OCI-LY7 (cell line): ENCODE measurements at regions of chr19 and their contacts with region 1.

Region 1: DNA sequence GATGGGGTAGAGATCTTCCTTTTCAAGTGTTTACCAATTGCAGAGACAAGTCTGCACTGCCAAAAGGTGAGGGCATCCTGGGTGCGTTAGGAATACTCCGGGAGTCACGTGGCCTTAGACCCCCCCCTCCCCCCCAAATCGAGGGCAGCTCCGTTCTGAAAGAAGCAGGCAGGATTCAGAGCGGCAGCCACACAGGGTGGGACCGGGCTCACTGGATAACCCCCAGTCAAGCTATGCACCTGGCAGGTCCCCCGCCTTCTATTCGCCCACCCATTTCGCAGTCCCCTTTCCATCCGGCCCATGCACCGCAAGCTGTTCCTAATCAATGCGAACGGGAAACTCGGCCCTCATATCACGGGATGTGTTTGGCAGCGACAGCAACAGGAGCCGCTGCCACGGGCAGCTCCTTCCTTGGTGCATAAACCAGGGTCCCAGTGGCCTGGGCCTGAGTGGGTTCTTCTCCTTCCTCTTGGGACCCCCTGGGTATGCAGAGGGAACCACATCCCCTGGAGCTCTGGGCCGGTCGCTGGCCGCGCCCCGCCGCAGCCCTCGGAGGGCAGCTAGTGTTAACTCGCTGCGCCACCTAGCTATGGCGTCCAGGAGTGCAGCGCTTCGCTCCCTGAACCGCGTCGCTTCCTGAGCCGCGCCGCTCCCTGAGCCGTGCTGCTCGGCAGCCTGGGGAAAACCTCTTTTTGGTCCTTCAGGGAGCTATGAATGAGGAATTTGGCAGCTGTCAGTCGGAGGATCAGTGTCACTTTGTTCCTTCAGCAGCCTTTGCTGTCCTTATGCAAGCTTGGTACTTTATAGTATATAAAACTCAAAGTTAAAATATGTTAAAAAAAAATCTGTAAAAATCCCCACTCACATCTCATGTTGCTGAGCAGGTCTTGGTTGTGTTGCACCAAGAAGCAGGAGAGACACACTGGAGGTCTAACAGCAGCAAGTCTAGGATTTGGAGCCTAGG is 41.4 kb downstream of the LYL1 start:
- DNase-seq: peak; percentile 86
- H3K4me3 ChIP-seq: peak overlapping the region; percentile 61
- H3K27ac ChIP-seq: no peak overlapping the region
- H3K4me1 ChIP-seq: peaks cover 29% of the 10 kb centered on the region
- CTCF ChIP-seq: peak; percentile 95

Region 2: DNA sequence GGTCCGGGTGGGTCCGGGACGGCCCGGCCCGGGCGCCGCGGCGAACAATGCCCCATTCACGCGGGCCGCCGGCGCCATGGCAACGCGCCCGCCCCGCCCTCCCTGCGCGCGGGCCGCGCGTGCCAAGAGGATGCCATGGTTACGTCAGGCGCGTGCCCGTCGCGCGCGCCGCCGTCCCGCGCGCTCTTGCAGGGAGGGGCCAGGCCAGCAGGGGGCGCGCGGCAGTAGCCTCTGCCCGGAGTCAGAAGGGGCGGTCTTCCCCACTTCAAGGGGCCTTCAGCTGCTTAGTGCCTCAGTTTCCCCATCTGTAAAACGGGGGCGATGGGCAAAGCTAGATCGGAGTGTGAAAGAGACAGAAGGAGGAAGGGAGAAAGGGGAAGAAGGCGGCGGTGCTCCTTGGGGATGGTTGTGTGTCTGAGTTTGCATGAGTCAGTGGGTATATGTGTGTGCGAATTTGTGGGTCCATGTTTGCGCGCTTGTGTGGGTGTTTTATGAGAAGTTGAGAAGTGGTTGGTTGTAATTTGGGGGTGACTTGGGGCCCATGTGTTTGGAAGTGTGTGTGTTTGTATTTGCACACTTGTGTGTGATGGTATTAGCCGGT is 77.6 kb before region 1 on chr19:
- CTCF ChIA-PET with region 1: interaction called, 8 read pairs
- POLR2A ChIA-PET with region 1: no interaction called
- intact Hi-C with region 1: loop called (anchors 2 kb)
- DNase-seq: peak; percentile 79
- H3K4me3 ChIP-seq: peak overlapping the region; percentile 51
- H3K27ac ChIP-seq: no peak overlapping the region
- H3K4me1 ChIP-seq: no peaks in the 10 kb centered on the region
- CTCF ChIP-seq: peak; percentile 82

Region 3: GRCh38 chr19:13042443-13043130 is 18.7 kb before region 1 on chr19:
- CTCF ChIA-PET with region 1: interaction called, 4 read pairs
- POLR2A ChIA-PET with region 1: interaction called, 11 read pairs
- intact Hi-C with region 1: no loop called
- DNase-seq: no peak
- H3K4me3 ChIP-seq: no peak overlapping the region
- H3K27ac ChIP-seq: no peak overlapping the region
- H3K4me1 ChIP-seq: peaks cover 6% of the 10 kb centered on the region
- CTCF ChIP-seq: no peak

Region 4: DNA sequence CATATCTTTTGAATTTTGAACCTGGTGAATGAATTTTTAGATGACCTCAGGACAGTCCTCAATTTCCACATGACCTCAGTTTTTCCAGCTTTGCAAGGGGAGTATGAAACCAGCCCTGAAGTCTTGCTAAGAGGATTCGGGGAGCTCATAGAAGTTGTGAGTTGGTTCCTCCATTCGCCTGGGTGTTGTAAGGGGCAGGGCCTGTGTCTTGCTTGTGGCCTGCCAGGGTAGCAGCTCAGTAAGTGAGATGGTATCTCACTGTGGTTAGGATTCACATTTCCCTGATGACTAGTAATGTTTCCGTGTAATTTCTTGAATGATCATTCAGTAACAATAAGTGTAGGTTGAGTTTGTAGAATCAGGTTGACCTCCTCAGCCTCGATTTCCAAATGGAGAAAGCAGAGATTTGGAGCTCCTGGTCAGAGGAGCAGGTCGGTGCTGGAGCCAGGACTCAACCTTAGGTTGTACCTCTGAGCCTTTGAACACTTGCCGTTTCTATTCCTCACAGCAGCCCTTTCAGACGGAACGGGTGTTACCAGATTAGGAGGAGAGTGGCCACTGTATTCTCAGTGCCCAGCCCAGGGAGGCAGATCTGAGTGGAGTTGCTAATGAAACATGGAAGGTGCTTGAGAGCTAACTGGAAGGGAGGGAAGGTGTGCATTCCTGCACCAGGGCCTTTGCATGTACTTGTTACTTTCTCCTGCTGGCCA is 71.4 kb after region 1 on chr19:
- CTCF ChIA-PET with region 1: no interaction called
- POLR2A ChIA-PET with region 1: no interaction called
- intact Hi-C with region 1: no loop called
- DNase-seq: no peak
- H3K4me3 ChIP-seq: no peak overlapping the region
- H3K27ac ChIP-seq: no peak overlapping the region
- H3K4me1 ChIP-seq: no peaks in the 10 kb centered on the region
- CTCF ChIP-seq: no peak